ENCODE measurements at regions of chr7 and their contacts with region 1.

Region 1: DNA sequence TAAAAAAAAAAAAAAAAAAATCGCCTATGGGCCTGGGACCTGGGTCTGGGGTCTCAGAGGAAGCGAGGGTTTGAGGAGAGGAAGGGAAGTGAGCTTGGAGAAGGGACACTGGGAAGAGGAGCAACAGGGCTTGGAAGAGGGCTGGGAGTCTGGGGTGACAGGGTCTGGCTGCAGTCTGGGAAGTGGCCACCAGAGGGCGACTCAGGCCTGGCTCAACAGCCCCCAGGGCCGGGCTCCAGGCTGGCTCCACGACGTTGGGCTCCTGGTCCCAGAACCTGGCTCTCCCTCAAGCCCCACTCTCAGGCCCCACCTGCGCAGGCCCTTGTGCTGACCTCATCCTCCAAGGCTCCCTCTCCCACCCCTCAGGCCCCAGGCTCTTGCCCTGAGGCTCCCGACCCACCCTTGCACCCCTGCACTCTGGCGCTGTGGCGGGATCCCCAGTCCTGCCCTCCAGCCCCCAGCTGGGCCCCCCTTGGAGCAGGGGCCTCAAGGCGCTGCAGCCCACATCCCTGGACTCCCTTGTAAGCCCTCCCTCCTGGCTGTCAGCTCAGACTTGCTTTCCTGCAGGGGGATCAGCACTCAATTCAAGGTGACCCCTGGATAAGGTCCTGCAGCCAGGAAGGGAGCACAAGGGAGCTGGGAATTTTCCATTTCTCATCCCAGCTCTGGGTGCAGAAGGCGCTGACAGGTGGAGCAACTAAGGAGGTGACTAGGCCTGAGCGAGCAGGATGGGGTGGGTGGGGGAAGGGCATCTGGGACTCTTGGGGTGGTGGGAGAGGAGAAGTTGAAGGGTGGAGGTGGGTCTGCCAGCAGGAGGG is 5.4 kb upstream of the SPACDR start:
- DNase-seq: peak; percentile 80 to 91
- ATAC-seq: peak; percentile 74

Region 2: DNA sequence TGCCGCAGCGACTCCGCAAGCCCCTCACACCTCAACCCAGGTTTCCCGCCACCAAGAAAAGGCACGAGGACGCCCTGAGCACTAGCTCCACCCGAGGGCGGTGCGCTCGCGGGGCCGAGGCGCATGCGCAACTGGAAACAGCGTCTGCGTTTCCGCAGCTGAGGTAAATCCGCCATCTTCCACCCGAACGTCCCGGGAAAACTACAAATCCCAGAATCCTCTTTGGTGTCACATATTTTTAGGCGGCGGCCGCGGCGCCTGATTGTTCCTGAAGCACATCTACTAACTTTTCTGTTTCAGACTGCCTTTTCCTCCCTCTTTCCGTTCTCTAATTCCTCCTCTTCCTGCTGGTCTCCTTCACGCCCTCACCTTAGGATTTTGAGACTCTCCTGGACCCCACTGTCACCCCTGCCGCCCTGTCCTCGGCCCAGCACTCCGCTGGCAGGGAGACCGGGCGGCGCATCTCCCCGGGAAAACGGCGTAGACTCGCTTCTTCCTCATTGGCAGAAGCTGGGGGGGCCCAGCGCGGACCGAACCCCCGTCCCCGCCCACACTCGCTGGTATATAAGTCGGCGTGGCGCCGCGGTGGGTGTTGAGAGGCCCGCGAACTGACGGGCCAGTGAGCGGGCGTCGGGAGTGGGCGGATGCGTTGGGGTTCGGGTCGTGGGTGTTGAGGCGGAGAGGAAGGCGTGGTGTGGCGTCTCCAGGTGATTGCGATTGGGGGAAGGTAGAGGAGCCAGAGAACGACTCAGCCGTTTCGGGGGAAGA is 41.1 kb before region 1 on chr7 and contains the start of gene ZCWPW1:
- intact Hi-C with region 1: no loop called
- DNase-seq: peak; percentile 96
- ATAC-seq: peak; percentile 68
- total RNA-seq, gene ZCWPW1: 1.2 to 1.6 TPM

Region 3: DNA sequence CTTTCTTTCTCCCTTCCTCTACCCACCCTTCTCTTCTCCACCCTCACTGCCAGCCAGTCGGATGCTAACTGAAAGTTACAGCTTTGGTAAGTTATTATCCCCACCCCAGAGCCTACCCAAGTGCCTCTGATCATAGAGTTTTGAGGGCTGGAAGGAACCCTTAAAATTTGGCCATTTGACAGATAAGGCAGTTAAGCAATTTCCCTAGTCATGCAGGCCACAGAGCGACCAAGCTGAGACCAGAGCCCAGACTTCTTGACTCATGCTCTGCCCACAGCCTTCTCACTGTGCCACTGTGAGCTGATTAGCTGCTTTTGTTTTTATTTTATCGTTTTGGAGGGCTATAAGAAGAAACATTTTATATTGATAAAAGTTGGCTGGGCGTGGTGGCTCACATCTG is 87.1 kb after region 1 on chr7:
- intact Hi-C with region 1: loop called (anchors 5 kb)
- DNase-seq: no peak
- ATAC-seq: no peak

Region 4: GRCh38 chr7:100753750-100754149 is 284.3 kb after region 1 on chr7:
- intact Hi-C with region 1: no loop called
- DNase-seq: no peak
- ATAC-seq: no peak

Measured in left colon (tissue), 2 donors.